ENCODE measurements at regions of chr6 and their contacts with region 1.

Region 1: GRCh38 chr6:149545754-149546528 is at the start of gene PPIL4:
- DNase-seq: peak; percentile 97
- ATAC-seq: peak; percentile 84
- H3K4me3 Mint-ChIP-seq: peak within 1 kb of the TSS; percentile 92
- H3K27ac Mint-ChIP-seq: peak within 1 kb of the TSS; percentile 97
- H3K4me1 Mint-ChIP-seq: peaks cover 30% of the 10 kb centered on the region
- H3K27me3 Mint-ChIP-seq: peaks cover 5% of the 10 kb centered on the region
- total RNA-seq, gene PPIL4: 17.4 to 18.5 TPM

Region 2: GRCh38 chr6:149429427-149430360 is 116.2 kb before region 1 on chr6:
- CTCF ChIA-PET with region 1: no interaction called
- POLR2A ChIA-PET with region 1: no interaction called
- DNase-seq: no peak
- ATAC-seq: no peak
- H3K4me3 Mint-ChIP-seq: no peak overlapping the region
- H3K27ac Mint-ChIP-seq: peak overlapping the region; percentile 27
- H3K4me1 Mint-ChIP-seq: peaks cover 8% of the 10 kb centered on the region
- H3K27me3 Mint-ChIP-seq: no peaks in the 10 kb centered on the region

Region 3: GRCh38 chr6:149454386-149454848 is 91.5 kb before region 1 on chr6:
- CTCF ChIA-PET with region 1: no interaction called
- POLR2A ChIA-PET with region 1: no interaction called
- DNase-seq: no peak
- ATAC-seq: no peak
- H3K4me3 Mint-ChIP-seq: no peak overlapping the region
- H3K27ac Mint-ChIP-seq: no peak overlapping the region
- H3K4me1 Mint-ChIP-seq: peaks cover 5% of the 10 kb centered on the region
- H3K27me3 Mint-ChIP-seq: no peaks in the 10 kb centered on the region

Region 4: DNA sequence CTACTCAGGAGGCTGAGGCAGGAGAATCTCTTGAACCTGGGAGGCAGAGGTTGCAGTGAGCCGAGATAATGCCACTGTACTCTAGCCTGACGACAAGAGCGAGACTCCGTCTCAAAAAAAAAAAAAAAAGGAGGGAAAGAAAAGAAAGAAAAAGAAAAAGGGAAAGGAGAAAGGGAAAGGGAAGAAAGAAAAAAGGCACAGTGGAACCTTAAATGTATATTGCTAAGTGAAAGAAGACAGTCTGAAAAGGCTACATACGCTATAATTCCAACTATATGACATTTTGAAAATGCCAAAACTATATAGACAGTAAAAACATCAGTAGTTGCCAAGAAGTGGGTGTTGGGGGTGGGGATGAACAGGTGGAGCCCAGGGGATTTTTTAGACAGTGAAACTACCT is 16.3 kb before region 1 on chr6:
- CTCF ChIA-PET with region 1: interaction called, 12 read pairs
- POLR2A ChIA-PET with region 1: interaction called, 8 read pairs
- DNase-seq: no peak
- ATAC-seq: no peak
- H3K4me3 Mint-ChIP-seq: no peak overlapping the region
- H3K27ac Mint-ChIP-seq: no peak overlapping the region
- H3K4me1 Mint-ChIP-seq: no peaks in the 10 kb centered on the region
- H3K27me3 Mint-ChIP-seq: no peaks in the 10 kb centered on the region

Region 5: GRCh38 chr6:149560736-149561135 is 14.8 kb after region 1 on chr6:
- CTCF ChIA-PET with region 1: interaction called, 21 read pairs
- POLR2A ChIA-PET with region 1: interaction called, 18 read pairs
- DNase-seq: peak; percentile 36
- ATAC-seq: peak; percentile 28
- H3K4me3 Mint-ChIP-seq: no peak overlapping the region
- H3K27ac Mint-ChIP-seq: no peak overlapping the region
- H3K4me1 Mint-ChIP-seq: peaks cover 7% of the 10 kb centered on the region
- H3K27me3 Mint-ChIP-seq: peaks cover 31% of the 10 kb centered on the region

Region 6: GRCh38 chr6:149565527-149566409 is 19.8 kb after region 1 on chr6 and contains the start of gene GINM1:
- CTCF ChIA-PET with region 1: interaction called, 21 read pairs
- POLR2A ChIA-PET with region 1: interaction called, 18 read pairs
- DNase-seq: peak; percentile 96
- ATAC-seq: peak; percentile 91
- H3K4me3 Mint-ChIP-seq: peak within 1 kb of the TSS; percentile 95
- H3K27ac Mint-ChIP-seq: peak within 1 kb of the TSS; percentile 92
- H3K4me1 Mint-ChIP-seq: peaks cover 24% of the 10 kb centered on the region
- H3K27me3 Mint-ChIP-seq: no peaks in the 10 kb centered on the region
- total RNA-seq, gene GINM1: 17.8 to 18.6 TPM

Region 7: GRCh38 chr6:149593443-149593842 is 47.5 kb after region 1 on chr6:
- CTCF ChIA-PET with region 1: no interaction called
- POLR2A ChIA-PET with region 1: no interaction called
- DNase-seq: no peak
- ATAC-seq: no peak
- H3K4me3 Mint-ChIP-seq: no peak overlapping the region
- H3K27ac Mint-ChIP-seq: no peak overlapping the region
- H3K4me1 Mint-ChIP-seq: no peaks in the 10 kb centered on the region
- H3K27me3 Mint-ChIP-seq: no peaks in the 10 kb centered on the region

Region 8: DNA sequence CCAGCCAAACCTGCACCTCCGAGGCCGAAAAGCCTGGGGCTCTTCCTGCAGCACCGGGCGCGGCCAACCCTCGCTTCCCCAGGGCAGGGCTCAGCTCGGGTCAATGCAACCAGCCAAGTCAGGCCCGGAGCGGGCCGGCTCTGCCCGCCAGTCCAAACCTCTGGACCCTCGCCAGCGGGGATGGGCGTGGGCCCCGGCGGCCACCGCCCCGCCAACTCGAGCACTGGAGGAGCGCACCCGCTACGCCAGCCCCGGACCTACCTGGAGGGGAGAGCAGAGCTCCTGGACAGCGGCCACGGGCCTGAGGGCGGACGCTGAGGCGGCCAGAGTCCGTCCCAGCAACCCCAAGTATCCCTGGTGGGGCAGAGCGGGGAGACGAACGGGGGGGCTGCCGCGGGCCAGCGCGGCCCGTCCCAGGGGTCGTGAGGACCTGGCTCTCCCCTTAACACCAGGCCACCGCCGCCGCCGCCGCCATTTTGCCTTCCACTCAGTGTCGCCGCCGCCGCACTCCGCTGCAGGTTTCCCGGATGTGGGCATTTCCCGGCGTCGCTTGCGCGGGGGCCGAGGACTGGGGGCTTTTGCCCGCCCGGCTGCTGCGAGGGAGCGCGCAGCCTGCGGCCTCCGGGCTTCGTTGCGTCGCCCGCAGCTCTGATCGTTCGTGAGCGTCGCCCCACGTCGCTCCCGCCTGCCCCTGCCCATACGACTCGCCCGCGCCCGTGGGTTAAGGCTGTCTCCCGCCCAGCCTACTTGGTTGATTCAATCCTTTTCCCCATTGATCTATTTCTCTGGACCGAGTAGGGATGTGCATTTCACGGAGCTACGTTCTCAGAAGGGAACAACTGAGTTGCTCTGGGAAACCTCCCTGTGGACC is 171.9 kb after region 1 on chr6 and contains the start of gene LATS1:
- CTCF ChIA-PET with region 1: interaction called, 3 read pairs
- POLR2A ChIA-PET with region 1: interaction called, 14 read pairs
- DNase-seq: peak; percentile 95
- ATAC-seq: peak; percentile 90
- H3K4me3 Mint-ChIP-seq: peak within 1 kb of the TSS; percentile 90
- H3K27ac Mint-ChIP-seq: peak within 1 kb of the TSS; percentile 93
- H3K4me1 Mint-ChIP-seq: peaks cover 37% of the 10 kb centered on the region
- H3K27me3 Mint-ChIP-seq: no peaks in the 10 kb centered on the region
- total RNA-seq, gene LATS1: 33.2 to 33.9 TPM

Measured in activated CD8-positive, alpha-beta T cell treated with anti-CD3 and anti-CD28 coated beads, Interleukin-2, amount 10 ng/mL, durations not matched to agents 7 days and 5 days (primary cell).